Right cardiac atrium (tissue), 5 donors: ENCODE measurements at regions of chr7 and their contacts with region 1.

Region 1: GRCh38 chr7:121366852-121367431 is 29.2 kb downstream of the FAM3C start:
- DNase-seq: no peak
- ATAC-seq: no peak
- H3K4me3 ChIP-seq: no peak overlapping the region
- H3K27ac ChIP-seq: no peak overlapping the region
- H3K4me1 ChIP-seq: no peaks in the 10 kb centered on the region
- H3K27me3 ChIP-seq: no peaks in the 10 kb centered on the region

Region 2: DNA sequence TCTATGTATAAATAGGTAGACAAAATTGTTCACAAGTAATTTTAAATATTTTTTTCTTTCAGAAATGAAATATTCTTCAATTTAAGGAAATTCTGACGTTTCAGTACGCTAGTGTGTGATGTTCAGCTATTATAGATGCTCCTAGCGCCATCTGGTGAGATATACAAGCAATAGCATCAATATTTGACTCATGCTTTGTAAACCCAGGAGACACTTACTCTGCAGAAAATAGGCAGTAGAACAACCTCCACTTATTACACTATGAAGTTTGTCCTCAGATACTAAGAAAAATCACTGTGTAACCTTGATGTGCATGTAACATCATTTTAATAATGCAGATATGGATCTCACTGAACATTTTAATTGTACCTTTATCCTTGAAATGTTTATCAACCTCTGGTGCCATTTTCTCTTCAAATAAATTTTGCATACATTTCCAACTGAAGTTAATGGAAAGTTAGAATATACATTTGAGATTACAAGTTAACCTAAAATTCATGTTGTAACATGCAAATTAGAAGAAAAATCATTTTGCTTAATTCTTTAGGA is 180.7 kb after region 1 on chr7:
- intact Hi-C with region 1: loop called (anchors 2 to 5 kb)
- DNase-seq: no peak
- ATAC-seq: peak; percentile 75 to 83
- H3K4me3 ChIP-seq: no peak overlapping the region
- H3K27ac ChIP-seq: no peak overlapping the region
- H3K4me1 ChIP-seq: no peaks in the 10 kb centered on the region
- H3K27me3 ChIP-seq: no peaks in the 10 kb centered on the region